ENCODE measurements at regions of chr1 and their contacts with region 1.

Region 1: DNA sequence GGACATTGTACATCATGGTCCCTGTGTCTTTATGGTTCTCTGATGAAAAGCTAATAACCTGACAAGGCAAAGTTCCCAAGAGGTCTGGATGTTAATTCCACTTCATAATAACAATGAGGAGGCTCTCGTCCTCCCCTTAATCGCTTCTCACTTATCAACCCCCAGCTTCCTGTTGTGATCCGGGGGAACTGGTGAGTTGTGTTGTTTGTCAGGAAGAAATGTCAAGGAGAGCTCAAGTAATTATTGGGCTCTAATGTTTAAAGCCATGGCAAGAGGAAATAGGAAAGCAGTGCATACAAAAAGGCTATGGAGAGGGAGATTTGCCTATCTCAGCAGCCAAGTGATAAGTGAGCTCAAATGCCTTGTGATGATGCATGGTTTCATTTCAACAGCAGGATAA is 42.8 kb upstream of the RASAL2 start:
- DNase-seq: no peak
- H3K4me3 ChIP-seq: no peak overlapping the region
- H3K27me3 ChIP-seq: no peaks in the 10 kb centered on the region
- CTCF ChIP-seq: no peak

Region 2: DNA sequence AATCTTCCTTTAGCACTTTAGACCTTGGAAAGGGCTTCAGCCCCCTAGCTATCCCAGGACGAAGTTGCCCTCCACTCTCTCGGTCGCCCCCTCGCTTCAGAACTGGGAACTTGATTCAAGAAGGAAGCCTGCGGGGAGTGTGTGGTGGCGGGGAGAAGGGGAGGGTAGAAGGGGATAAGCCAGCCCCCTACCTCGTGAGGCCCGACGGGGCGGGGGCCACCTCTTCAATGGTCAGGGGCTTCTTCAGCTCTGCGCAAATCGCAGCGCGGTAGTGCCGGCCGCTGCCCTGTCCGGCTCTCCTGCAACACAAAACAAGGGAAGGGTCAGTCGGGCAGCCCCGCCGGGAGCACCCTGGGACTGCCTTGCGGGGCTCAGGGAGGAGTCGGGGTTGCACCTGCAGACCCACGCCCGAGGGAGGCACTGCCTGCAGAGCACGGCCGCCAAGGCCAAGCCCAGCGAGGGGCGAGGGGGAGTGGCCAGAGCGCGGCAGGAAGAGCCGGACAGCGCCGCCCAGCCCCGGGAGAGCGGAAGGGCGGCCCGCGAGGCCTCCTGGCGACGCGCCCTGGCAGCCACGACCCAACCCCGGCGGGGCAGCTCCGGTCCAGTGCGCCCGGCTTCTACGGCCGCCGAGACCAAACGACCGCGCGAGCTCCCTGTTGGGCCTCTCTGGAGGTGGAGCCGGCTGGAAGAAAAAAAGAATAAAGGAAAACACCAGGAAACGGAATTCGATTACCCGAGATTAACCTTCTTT is 13.4 kb before region 1 on chr1:
- CTCF ChIA-PET with region 1: interaction called, 10 read pairs
- POLR2A ChIA-PET with region 1: no interaction called
- DNase-seq: no peak
- H3K4me3 ChIP-seq: peak overlapping the region; percentile 52
- H3K27me3 ChIP-seq: no peaks in the 10 kb centered on the region
- CTCF ChIP-seq: peak; percentile 48